ENCODE measurements at regions of chr3 and their contacts with region 1.

Region 1: GRCh38 chr3:167882067-167882667 is 146.6 kb downstream of the SERPINI1 start:
- DNase-seq: no peak
- H3K4me3 ChIP-seq: peak overlapping the region in 1 of 2 donors; percentile 26
- H3K27ac ChIP-seq: no peak overlapping the region
- H3K4me1 ChIP-seq: peaks cover 0 to under 1% of the 10 kb centered on the region in 2 donors
- H3K27me3 ChIP-seq: no peaks in the 10 kb centered on the region
- CTCF ChIP-seq: peak; percentile 41 to 79 (median 71)

Region 2: GRCh38 chr3:167691366-167691765 is 190.8 kb before region 1 on chr3:
- intact Hi-C with region 1: loop called (anchors 10 kb)
- DNase-seq: no peak
- H3K4me3 ChIP-seq: no peak overlapping the region
- H3K27ac ChIP-seq: no peak overlapping the region
- H3K4me1 ChIP-seq: no peaks in the 10 kb centered on the region
- H3K27me3 ChIP-seq: no peaks in the 10 kb centered on the region
- CTCF ChIP-seq: no peak

Region 3: GRCh38 chr3:167734498-167735232 is 147.5 kb before region 1 on chr3 and contains the start of gene PDCD10:
- intact Hi-C with region 1: loop called (anchors 2 kb)
- DNase-seq: peak; percentile 95 to 99
- H3K4me3 ChIP-seq: peak within 1 kb of the TSS; percentile 91
- H3K27ac ChIP-seq: peak within 1 kb of the TSS; percentile 89 to 92
- H3K4me1 ChIP-seq: peaks cover 0 to 22% of the 10 kb centered on the region in 2 donors
- H3K27me3 ChIP-seq: no peaks in the 10 kb centered on the region
- CTCF ChIP-seq: no peak
- total RNA-seq, gene PDCD10: 55.6 TPM

Region 4: GRCh38 chr3:167787440-167787839 is 94.7 kb before region 1 on chr3:
- intact Hi-C with region 1: no loop called
- DNase-seq: no peak
- H3K4me3 ChIP-seq: no peak overlapping the region
- H3K27ac ChIP-seq: no peak overlapping the region
- H3K4me1 ChIP-seq: peaks cover 0 to 5% of the 10 kb centered on the region in 2 donors
- H3K27me3 ChIP-seq: no peaks in the 10 kb centered on the region
- CTCF ChIP-seq: no peak

Region 5: DNA sequence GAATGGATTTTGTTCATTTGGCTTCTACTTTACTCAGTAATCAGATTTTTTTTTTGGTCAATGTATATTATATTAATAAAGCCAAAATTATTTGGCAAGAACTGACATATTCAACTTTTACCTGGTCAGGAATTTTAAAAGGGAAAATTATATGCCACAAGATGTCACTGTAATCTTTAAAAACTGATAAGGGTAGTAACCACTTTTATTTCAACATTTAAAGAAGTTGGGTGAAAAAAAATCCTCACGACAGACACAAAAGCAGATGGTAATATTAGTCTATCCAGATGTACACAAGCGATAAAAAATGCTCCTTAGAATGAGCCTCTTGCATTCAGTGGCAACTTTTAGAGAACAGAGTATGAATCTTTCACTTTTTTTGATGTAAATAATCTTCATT is 44.7 kb before region 1 on chr3:
- intact Hi-C with region 1: loop called (anchors 1 kb)
- DNase-seq: no peak
- H3K4me3 ChIP-seq: no peak overlapping the region
- H3K27ac ChIP-seq: no peak overlapping the region
- H3K4me1 ChIP-seq: no peaks in the 10 kb centered on the region
- H3K27me3 ChIP-seq: peaks cover 5% of the 10 kb centered on the region
- CTCF ChIP-seq: peak in 2 of 3 experiments; percentile 14 to 39

Region 6: GRCh38 chr3:167918686-167919085 is 36.5 kb after region 1 on chr3:
- intact Hi-C with region 1: no loop called
- DNase-seq: no peak
- H3K4me3 ChIP-seq: no peak overlapping the region
- H3K27ac ChIP-seq: no peak overlapping the region
- H3K4me1 ChIP-seq: no peaks in the 10 kb centered on the region
- H3K27me3 ChIP-seq: no peaks in the 10 kb centered on the region
- CTCF ChIP-seq: no peak